ENCODE measurements at regions of chr3 and their contacts with region 1.

Region 1: DNA sequence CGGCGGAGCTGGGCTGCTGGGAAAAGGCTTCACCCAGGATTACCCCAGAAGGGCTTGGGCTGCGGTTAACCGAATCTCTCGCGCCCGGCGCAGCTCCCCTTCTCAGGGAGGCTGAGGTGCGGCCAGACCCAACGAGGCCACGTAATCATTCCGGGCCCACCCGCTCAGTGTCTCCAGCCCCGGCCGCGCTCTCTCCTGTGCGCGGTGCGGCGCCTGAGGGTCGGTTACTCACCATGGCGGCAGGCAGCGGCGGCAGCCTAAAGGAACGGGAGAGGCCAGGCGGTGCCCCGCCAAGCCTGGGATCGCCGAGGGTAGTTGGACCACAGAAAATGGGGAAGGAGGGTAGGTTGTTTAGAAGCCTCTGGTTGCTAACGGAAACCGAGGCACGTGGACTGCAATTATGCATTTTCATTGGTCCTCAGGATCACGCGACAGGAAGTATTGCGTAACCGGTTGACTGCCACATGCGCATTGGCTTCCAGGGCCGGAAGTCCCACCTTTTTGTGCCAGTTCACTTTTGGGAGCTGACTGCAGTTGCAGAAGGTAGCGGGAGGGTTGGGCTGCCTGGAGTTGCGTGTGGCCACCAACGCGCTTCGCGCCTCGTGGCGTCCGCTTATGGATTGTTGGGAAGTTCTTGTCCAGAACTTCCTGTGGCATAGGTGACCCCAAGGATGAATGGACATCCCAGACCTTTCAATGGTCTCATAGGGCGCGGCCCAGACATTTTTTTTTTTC is at the start of gene LZTFL1:
- DNase-seq: peak; percentile 92 to 94
- H3K4me3 ChIP-seq: peak within 1 kb of the TSS; percentile 85 to 92
- H3K27ac ChIP-seq: peak within 1 kb of the TSS; percentile 47 to 50
- H3K4me1 ChIP-seq: no peaks in the 10 kb centered on the region
- H3K27me3 ChIP-seq: no peaks in the 10 kb centered on the region
- CTCF ChIP-seq: peak in 1 of 4 experiments; percentile 31
- POLR2A ChIP-seq: peak in 1 of 2 donors; percentile 38
- total RNA-seq, gene LZTFL1: 13.8 to 44.5 (median 21.0) TPM

Region 2: DNA sequence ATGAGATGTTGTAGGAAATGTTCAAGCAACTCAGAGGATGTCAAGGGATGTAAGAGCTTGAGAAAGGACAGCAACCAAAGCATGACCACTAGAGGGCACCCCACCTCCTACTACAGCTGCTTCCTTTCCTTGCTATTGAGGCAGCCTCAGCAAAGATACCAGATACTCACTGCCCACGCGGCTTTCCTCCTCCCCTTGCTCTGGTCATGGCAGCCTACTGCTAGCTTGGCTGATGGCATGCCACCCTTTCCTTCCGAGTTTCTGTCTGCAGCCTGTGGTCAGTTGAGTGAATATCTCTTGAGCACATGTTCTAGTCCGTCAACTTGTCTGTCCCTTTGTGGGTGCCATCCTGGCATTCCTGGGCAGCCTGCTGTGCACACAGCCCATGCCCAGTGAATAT is 96.9 kb after region 1 on chr3:
- intact Hi-C with region 1: loop called (anchors 10 kb)
- DNase-seq: peak; percentile 82 to 92
- H3K4me3 ChIP-seq: no peak overlapping the region
- H3K27ac ChIP-seq: peak overlapping the region in 1 of 2 donors; percentile 10
- H3K4me1 ChIP-seq: peaks cover 0 to 3% of the 10 kb centered on the region in 2 donors
- H3K27me3 ChIP-seq: no peaks in the 10 kb centered on the region
- CTCF ChIP-seq: peak; percentile 85 to 93 (median 91)
- POLR2A ChIP-seq: peak in 1 of 2 donors; percentile 17

Region 3: DNA sequence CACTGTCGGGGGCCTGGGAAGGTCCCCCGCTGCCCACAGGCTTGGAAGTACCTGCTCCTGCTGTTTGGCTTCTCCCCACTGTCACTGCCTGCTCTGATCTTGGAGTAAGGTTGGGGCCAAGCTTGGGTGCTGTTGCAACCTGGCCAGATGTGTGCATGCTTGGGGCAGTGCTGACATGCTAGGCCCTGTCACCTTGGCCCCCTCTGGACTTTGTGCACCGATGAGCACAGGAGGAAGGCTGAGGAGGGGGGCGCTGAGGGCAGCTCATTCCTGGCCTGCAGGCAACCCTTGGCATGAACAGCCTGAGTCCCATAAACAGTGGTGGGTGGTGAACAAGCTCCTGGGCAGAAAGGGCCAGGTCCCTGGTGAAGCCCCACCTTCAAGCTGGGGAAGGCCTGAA is 189.3 kb after region 1 on chr3:
- intact Hi-C with region 1: no loop called
- DNase-seq: no peak
- H3K4me3 ChIP-seq: no peak overlapping the region
- H3K27ac ChIP-seq: no peak overlapping the region
- H3K4me1 ChIP-seq: no peaks in the 10 kb centered on the region
- H3K27me3 ChIP-seq: no peaks in the 10 kb centered on the region
- CTCF ChIP-seq: no peak
- POLR2A ChIP-seq: no peak

Region 4: GRCh38 chr3:46228259-46229242 is 386.6 kb after region 1 on chr3:
- intact Hi-C with region 1: no loop called
- DNase-seq: no peak
- H3K4me3 ChIP-seq: no peak overlapping the region
- H3K27ac ChIP-seq: no peak overlapping the region
- H3K4me1 ChIP-seq: no peaks in the 10 kb centered on the region
- H3K27me3 ChIP-seq: no peaks in the 10 kb centered on the region
- CTCF ChIP-seq: no peak
- POLR2A ChIP-seq: no peak